Activated B cell treated with CpG ODN at 0.5 μM for 24 hours (primary cell): ENCODE measurements at regions of chr11 and their contacts with region 1.

Region 1: DNA sequence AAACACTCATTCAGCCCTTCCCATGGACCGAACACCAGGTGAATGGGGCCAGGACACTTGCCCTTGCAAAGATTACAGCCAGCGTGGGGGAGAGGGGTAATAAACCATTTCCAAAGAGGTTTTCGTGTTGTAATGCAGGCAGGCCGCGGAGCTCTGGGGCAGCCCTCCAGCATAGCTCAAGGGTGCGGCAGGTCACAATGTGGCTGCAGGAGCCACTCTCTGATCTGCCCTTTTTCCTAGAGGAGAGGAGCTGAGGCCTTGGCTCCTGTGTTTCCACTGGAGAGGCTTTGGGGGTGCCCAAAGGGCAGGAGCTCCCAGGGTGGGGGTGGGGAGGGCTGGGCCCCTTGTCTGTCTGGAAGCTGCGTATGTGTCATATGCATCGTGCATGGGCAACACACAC is 134.2 kb upstream of the NECTIN1 start:
- DNase-seq: no peak
- ATAC-seq: no peak
- H3K4me3 Mint-ChIP-seq: no peak overlapping the region
- H3K27ac Mint-ChIP-seq: no peak overlapping the region
- H3K4me1 Mint-ChIP-seq: no peaks in the 10 kb centered on the region
- H3K27me3 Mint-ChIP-seq: peaks cover under 1% of the 10 kb centered on the region
- CTCF ChIP-seq: no peak

Region 2: DNA sequence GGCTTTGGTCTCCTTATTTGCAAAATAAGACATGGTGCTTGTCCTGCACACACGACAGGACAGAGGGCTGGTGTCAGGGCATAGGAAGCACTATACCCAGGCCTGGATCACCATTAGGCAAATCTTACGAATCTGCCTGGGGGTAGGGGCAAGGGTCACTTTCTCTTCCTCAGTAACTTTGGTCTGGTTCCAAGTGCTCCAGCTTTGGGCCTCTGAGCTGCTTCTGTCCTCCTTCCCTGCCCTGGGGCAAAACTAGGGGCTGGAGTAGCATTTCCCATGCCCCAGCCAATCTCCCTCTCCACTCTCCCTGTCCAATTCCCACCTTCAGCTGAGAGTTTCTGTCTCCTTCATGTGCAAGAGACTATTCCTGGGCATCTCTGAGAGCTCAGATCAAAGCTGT is 10.5 kb before region 1 on chr11:
- CTCF ChIA-PET with region 1: no interaction called
- POLR2A ChIA-PET with region 1: interaction called, 17 read pairs
- intact Hi-C with region 1: no loop called
- DNase-seq: no peak
- ATAC-seq: no peak
- H3K4me3 Mint-ChIP-seq: no peak overlapping the region
- H3K27ac Mint-ChIP-seq: no peak overlapping the region
- H3K4me1 Mint-ChIP-seq: no peaks in the 10 kb centered on the region
- H3K27me3 Mint-ChIP-seq: peaks cover 13% of the 10 kb centered on the region
- CTCF ChIP-seq: no peak